ENCODE measurements at regions of chr19 and their contacts with region 1.

Region 1: GRCh38 chr19:52028027-52028779 is at the start of gene ZNF614:
- DNase-seq: peak; percentile 68 to 80
- ATAC-seq: peak; percentile 98
- H3K4me3 ChIP-seq: peak within 1 kb of the TSS; percentile 77 to 87 (median 82)
- H3K27ac ChIP-seq: peak within 1 kb of the TSS; percentile 90 to 95 (median 92)
- H3K4me1 ChIP-seq: peaks cover 7 to 10% of the 10 kb centered on the region in 2 donors
- H3K27me3 ChIP-seq: no peaks in the 10 kb centered on the region
- CTCF ChIP-seq: no peak
- POLR2A ChIP-seq: peak; percentile 17 to 41
- total RNA-seq, gene ZNF614: 3.9 to 4.6 (median 3.9) TPM

Region 2: DNA sequence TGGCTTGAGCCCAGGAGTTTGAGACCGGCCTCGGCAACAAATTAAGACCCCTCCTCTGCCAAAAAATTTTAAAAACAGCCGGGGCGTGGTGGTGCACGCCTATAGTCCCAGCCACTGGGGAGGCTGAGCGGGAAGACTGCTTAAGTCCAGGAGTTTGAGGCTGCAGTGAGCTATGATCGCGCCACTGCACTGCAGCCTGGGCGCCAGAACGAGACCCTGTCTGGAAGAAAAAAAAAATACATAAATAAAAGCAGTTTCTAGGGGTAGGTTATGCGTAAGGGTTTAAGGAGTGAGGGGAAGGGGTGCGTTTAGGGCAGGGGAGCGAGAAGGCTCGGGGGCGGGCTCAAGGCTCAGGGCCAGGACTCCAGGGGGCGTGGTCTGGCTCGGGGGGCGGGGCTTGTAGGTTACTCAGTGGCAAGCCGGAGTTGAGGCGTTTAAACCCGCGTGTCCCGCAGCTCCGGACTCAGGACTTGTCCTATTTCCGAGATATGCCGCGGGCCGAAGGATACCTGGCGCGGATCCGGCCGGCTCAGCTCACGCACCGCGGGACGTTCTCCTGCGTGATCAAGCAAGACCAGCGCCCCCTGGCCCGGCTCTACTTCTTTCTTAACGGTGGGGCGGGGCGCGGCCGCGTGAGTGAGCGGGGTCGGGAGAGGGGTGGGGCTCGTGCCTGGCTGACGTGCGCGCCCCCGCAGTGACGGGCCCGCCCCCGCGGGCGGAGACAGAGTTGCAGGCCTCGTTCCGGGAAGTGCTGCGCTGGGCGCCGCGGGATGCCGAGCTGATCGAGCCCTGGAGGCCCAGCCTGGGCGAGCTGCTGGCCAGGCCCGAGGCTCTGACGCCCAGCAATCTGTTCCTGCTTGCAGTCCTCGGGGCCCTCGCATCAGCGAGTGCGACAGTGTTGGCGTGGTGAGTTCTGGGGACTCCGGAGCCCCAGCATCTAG is 324.4 kb before region 1 on chr19:
- in situ Hi-C with region 1: no loop called
- intact Hi-C with region 1: loop called (anchors 10 kb)
- DNase-seq: peak; percentile 84 to 87
- ATAC-seq: peak; percentile 88 to 93
- H3K4me3 ChIP-seq: peak overlapping the region; percentile 53 to 64 (median 60)
- H3K27ac ChIP-seq: peak overlapping the region; percentile 73 to 86 (median 79)
- H3K4me1 ChIP-seq: peaks cover 9 to 11% of the 10 kb centered on the region in 2 donors
- H3K27me3 ChIP-seq: no peaks in the 10 kb centered on the region
- CTCF ChIP-seq: peak in 2 of 5 experiments; percentile 43 to 48
- POLR2A ChIP-seq: peak; percentile 54 to 65

Region 3: GRCh38 chr19:51926784-51927742 is 101.1 kb before region 1 on chr19 and contains the start of gene ZNF613:
- in situ Hi-C with region 1: no loop called
- intact Hi-C with region 1: loop called (anchors 5 kb)
- DNase-seq: peak; percentile 78 to 83
- ATAC-seq: peak; percentile 95
- H3K4me3 ChIP-seq: peak within 1 kb of the TSS; percentile 73 to 95 (median 88)
- H3K27ac ChIP-seq: peak within 1 kb of the TSS; percentile 76 to 91 (median 86)
- H3K4me1 ChIP-seq: peaks cover 5 to 11% of the 10 kb centered on the region in 2 donors
- H3K27me3 ChIP-seq: no peaks in the 10 kb centered on the region
- CTCF ChIP-seq: peak in 2 of 5 experiments; percentile 35
- POLR2A ChIP-seq: no peak
- total RNA-seq, gene ZNF613: 1.3 to 9.4 (median 3.8) TPM

Region 4: GRCh38 chr19:51986309-51987291 is 41.6 kb before region 1 on chr19 and contains the start of gene ZNF350:
- in situ Hi-C with region 1: no loop called
- intact Hi-C with region 1: loop called (anchors 1 kb)
- DNase-seq: peak; percentile 87 to 91
- ATAC-seq: peak; percentile 100
- H3K4me3 ChIP-seq: peak within 1 kb of the TSS; percentile 69 to 92 (median 86)
- H3K27ac ChIP-seq: peak within 1 kb of the TSS; percentile 74 to 79 (median 77)
- H3K4me1 ChIP-seq: peaks cover 8 to 9% of the 10 kb centered on the region in 2 donors
- H3K27me3 ChIP-seq: no peaks in the 10 kb centered on the region
- CTCF ChIP-seq: no peak
- POLR2A ChIP-seq: peak in 1 of 2 donors; percentile 21
- total RNA-seq, gene ZNF350: 1.7 to 6.0 (median 5.0) TPM

Region 5: GRCh38 chr19:52007806-52008557 is 20.2 kb before region 1 on chr19 and contains the start of gene ZNF615:
- in situ Hi-C with region 1: no loop called
- intact Hi-C with region 1: loop called (anchors 1 kb)
- DNase-seq: peak; percentile 77 to 81
- ATAC-seq: peak; percentile 94 to 98
- H3K4me3 ChIP-seq: peak within 1 kb of the TSS; percentile 82 to 97 (median 88)
- H3K27ac ChIP-seq: peak within 1 kb of the TSS; percentile 75 to 86 (median 82)
- H3K4me1 ChIP-seq: peaks cover 0 to 5% of the 10 kb centered on the region in 2 donors
- H3K27me3 ChIP-seq: no peaks in the 10 kb centered on the region
- CTCF ChIP-seq: no peak
- POLR2A ChIP-seq: peak; percentile 10 to 14
- total RNA-seq, gene ZNF615: 5.6 to 8.9 (median 7.4) TPM

Region 6: GRCh38 chr19:52065399-52065798 is 37.2 kb after region 1 on chr19:
- in situ Hi-C with region 1: no loop called
- intact Hi-C with region 1: no loop called
- DNase-seq: no peak
- ATAC-seq: no peak
- H3K4me3 ChIP-seq: no peak overlapping the region
- H3K27ac ChIP-seq: no peak overlapping the region
- H3K4me1 ChIP-seq: no peaks in the 10 kb centered on the region
- H3K27me3 ChIP-seq: no peaks in the 10 kb centered on the region
- CTCF ChIP-seq: no peak
- POLR2A ChIP-seq: no peak

Region 7: DNA sequence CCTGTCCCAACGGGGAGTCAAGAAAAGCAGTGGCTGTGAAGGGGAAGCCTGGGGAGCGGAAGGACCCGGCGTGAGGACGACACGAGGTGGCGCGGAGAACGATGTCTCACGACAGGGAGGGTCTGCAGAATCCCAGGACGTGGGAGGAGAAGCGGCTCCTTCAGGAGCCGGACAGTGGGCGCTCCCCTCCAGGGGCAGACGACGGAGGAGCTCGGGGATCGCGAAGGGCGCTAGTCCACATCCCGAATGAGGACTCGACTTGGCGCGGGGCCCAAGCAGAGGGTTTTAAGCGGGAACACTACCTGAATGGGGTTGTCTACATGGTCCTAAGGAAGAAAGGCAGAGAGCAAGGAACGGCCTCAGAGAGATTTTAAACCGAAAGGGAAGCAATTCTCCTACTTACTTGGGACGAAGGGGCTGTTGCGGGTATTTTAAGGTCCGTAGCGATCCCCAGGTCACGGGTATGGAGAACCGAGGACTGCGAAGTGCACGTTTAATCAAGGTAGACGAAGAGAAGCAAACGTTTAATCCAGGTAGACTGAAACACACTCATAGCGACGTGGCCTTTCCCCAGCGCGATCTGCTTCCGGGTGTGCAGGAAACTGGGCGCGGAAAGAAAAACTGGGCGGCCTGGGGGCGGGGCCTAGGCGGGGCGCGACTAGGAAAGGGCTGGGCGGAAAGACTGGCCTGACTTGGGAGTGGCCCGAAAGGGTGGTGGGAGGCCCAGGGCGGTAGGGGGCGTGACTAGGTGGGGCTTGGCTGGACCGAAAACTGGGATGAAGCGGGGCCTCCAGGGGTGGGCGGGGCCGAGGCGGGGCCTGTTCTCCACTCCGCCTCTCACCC is 67.2 kb after region 1 on chr19 and contains the start of gene ZNF841:
- in situ Hi-C with region 1: no loop called
- intact Hi-C with region 1: loop called (anchors 1 kb)
- DNase-seq: peak; percentile 76 to 90
- ATAC-seq: peak; percentile 97 to 99
- H3K4me3 ChIP-seq: peak within 1 kb of the TSS; percentile 80 to 96 (median 92)
- H3K27ac ChIP-seq: peak within 1 kb of the TSS; percentile 65 to 78 (median 70)
- H3K4me1 ChIP-seq: peaks cover 16 to 21% of the 10 kb centered on the region in 2 donors
- H3K27me3 ChIP-seq: no peaks in the 10 kb centered on the region
- CTCF ChIP-seq: peak in 2 of 5 experiments; percentile 14 to 29
- POLR2A ChIP-seq: peak in 1 of 2 donors; percentile 27
- total RNA-seq, gene ZNF841: 2.1 to 3.1 (median 2.3) TPM

Measured in gastrocnemius medialis (tissue), 4 donors.